ENCODE measurements at regions of chr17 and their contacts with region 1.

Region 1: DNA sequence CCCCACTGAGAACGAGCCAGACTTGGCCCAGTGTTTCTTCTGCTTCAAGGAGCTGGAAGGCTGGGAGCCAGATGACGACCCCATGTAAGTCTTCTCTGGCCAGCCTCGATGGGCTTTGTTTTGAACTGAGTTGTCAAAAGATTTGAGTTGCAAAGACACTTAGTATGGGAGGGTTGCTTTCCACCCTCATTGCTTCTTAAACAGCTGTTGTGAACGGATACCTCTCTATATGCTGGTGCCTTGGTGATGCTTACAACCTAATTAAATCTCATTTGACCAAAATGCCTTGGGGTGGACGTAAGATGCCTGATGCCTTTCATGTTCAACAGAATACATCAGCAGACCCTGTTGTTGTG is 631 bp downstream of the BIRC5 start:
- DNase-seq: no peak
- ATAC-seq: no peak
- H3K4me3 ChIP-seq: peak overlapping the region; percentile 48 to 52
- H3K4me3 Mint-ChIP-seq: peak overlapping the region; percentile 70
- H3K27ac ChIP-seq: no peak overlapping the region
- H3K27ac Mint-ChIP-seq: no peak overlapping the region
- H3K4me1 ChIP-seq: peaks cover 7% of the 10 kb centered on the region
- H3K4me1 Mint-ChIP-seq: peaks cover 6% of the 10 kb centered on the region
- H3K27me3 ChIP-seq: no peaks in the 10 kb centered on the region
- H3K27me3 Mint-ChIP-seq: no peaks in the 10 kb centered on the region
- CTCF ChIP-seq: no peak

Region 2: DNA sequence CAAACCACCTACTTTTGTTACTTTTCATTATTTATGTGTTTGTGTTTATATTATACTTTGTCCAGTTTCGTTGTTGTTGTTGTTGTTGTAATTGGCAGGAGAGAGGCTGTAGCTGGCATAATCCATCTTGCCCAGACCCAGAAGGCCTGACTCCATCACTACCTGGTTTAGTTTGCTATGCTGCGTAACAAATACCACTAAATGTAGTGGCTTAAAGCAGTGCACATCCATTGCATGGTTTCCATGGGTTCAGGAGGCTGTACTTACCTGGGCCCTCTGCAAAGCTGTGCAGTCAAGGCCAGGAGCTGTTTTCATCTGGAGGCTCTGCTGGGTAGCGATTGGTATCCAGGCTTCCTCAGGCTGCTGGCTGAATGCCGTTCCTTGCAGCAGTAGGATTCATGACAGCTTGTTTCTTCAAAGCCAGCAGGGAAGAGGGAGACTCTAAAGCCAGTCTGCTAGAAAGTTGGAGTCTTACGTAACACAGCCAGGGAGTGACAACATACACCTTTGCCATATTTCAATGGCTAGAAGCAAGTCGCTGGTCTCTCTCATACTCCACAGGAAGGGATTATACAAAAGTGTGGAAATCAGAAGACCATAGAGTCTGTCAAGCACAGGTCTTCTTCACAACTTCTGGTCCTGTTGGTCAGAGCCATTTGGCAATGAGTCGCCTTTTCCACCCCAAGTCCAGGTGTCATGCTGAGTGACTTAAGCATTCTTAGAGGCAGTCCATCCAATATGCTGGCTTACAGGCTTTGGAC is 215.1 kb before region 1 on chr17:
- CTCF ChIA-PET with region 1: no interaction called
- POLR2A ChIA-PET with region 1: interaction called, 10 read pairs
- intact Hi-C with region 1: no loop called
- DNase-seq: no peak
- ATAC-seq: no peak
- H3K4me3 ChIP-seq: no peak overlapping the region
- H3K4me3 Mint-ChIP-seq: no peak overlapping the region
- H3K27ac ChIP-seq: no peak overlapping the region
- H3K27ac Mint-ChIP-seq: peak overlapping the region; percentile 66
- H3K4me1 ChIP-seq: peaks cover 54% of the 10 kb centered on the region
- H3K4me1 Mint-ChIP-seq: peaks cover 86% of the 10 kb centered on the region
- H3K27me3 ChIP-seq: no peaks in the 10 kb centered on the region
- H3K27me3 Mint-ChIP-seq: no peaks in the 10 kb centered on the region
- CTCF ChIP-seq: no peak

Region 3: DNA sequence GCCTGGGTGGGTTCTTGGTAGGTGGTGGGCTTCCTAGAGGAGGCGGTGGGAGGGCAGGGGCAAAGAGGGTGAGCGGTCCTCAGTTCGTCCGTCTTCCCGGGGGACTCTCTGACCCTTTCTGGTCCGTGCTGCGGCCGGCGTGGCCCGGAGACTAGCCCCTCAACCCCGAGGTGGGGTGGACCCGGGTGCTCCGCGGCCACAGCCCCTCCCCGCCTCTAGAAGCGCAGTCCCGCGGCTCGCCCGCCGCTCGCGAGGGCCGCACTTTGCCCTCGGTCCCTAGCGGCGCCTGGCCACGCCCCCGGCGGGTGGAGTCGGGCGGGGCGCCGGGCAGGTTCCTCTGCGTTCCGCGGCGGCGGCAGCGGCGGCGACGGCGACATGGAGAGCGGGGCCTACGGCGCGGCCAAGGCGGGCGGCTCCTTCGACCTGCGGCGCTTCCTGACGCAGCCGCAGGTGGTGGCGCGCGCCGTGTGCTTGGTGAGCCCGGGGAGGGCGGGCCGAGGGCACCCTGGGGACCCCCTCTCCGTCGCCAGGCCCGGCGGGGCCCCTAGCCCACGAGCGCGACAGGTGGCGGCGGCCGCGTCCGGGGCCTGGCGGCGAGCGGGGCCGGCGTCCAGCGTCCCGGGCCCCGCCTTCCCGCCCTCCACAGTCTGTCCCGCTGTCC is 46.3 kb before region 1 on chr17 and contains the start of gene SYNGR2:
- CTCF ChIA-PET with region 1: no interaction called
- POLR2A ChIA-PET with region 1: no interaction called
- intact Hi-C with region 1: loop called in 1 of 2 experiments (anchors 1 kb)
- DNase-seq: peak; percentile 74 to 93 (median 86)
- ATAC-seq: peak; percentile 89
- H3K4me3 ChIP-seq: peak within 1 kb of the TSS; percentile 52 to 59
- H3K4me3 Mint-ChIP-seq: peak within 1 kb of the TSS; percentile 69
- H3K27ac ChIP-seq: peak within 1 kb of the TSS; percentile 52 to 73
- H3K27ac Mint-ChIP-seq: peak within 1 kb of the TSS; percentile 79
- H3K4me1 ChIP-seq: peaks cover 30% of the 10 kb centered on the region
- H3K4me1 Mint-ChIP-seq: peaks cover 36% of the 10 kb centered on the region
- H3K27me3 ChIP-seq: no peaks in the 10 kb centered on the region
- H3K27me3 Mint-ChIP-seq: no peaks in the 10 kb centered on the region
- CTCF ChIP-seq: no peak
- total RNA-seq, gene SYNGR2: 36.4 to 36.7 TPM